ENCODE measurements at regions of chr5 and their contacts with region 1.

Region 1: GRCh38 chr5:89694026-89694550 is 715.5 kb downstream of the CETN3 start:
- DNase-seq: no peak

Region 2: DNA sequence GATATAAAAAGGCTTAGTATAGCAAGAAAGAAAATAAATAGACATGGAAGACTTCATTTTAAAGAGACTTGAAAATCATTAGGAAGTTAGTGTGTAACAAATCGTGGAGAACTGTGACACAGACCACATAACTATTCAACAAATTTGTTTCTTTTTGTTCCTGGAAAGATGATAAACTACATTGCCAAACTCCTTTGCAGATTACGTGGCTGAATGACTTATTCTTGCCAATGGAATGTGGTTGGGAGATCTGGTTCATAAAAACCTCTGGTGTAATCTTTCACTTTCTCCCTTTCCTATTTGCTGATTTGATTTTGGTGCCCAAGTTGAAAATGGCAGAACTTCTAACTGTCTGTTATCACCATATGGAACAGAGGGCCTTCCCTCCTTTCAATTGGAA is 482.3 kb before region 1 on chr5:
- intact Hi-C with region 1: no loop called
- DNase-seq: no peak

Region 3: DNA sequence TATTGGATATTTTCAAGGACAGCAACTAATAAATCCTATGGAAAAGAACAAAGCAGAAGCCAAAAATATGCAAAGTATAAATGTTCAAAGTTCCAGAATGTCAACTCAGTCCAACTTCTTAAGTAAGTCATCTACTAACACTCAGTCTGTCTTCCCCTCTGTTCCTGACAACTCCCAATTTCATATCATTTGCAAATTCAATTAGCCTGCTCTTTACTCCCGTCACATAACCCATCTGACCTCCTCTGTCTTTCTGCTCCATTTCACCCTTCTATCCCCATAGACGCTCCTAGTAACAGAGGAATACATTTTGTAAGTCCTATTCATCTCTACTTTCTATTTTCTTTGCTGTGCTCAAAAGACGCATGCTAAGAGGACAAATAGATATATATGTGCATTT is 151.4 kb before region 1 on chr5:
- intact Hi-C with region 1: loop called in 1 of 2 experiments (anchors 5 kb)
- DNase-seq: no peak